ENCODE measurements at regions of chr9 and their contacts with region 1.

Region 1: DNA sequence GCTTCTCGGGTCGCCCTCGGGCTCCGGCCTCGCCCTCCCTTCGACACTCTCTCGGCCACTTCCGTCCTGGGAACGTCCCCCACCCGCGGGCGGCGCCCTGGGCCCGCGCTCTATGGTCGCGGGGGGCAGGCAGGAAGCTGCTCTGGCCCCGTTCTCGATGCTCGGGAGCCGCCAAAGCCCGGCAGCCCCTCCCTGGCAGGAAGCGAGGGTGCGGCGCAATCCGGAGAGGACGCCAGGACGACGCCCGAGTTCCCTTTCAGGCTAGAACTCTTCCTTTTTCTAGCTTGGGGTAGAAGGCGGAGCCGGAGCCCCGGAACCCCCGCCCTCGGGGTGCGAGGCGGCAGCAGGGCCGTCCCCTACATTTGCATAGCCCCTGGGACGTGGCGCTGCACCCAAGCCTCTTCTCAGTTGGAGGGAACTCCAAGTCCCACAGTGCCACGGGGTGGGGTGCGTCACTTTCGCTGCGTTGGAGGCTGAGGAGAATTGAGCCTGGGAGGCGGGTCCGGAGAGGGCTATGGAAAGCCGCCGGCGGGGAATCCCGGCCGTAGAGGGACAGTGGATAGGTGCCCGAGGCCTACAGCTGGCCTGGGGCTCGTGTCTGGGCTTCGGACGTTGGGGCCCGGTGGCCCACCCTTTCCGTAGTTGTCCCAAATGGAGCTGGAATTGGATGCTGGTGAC is at the starts of genes CREB3 and TLN1:
- DNase-seq: peak; percentile 99
- ATAC-seq: peak; percentile 90
- H3K4me3 Mint-ChIP-seq: no peak within 1 kb of the TSS
- H3K27ac Mint-ChIP-seq: peak within 1 kb of the TSS; percentile 87
- H3K4me1 Mint-ChIP-seq: peaks cover 23% of the 10 kb centered on the region
- H3K27me3 Mint-ChIP-seq: no peaks in the 10 kb centered on the region
- total RNA-seq, gene CREB3: 20.5 to 24.7 TPM
- total RNA-seq, gene TLN1: 372 to 374 TPM

Region 2: GRCh38 chr9:35611230-35611797 is 120.9 kb before region 1 on chr9:
- CTCF ChIA-PET with region 1: interaction called, 15 read pairs
- DNase-seq: peak; percentile 73
- ATAC-seq: peak; percentile 87
- H3K4me3 Mint-ChIP-seq: no peak overlapping the region
- H3K27ac Mint-ChIP-seq: no peak overlapping the region
- H3K4me1 Mint-ChIP-seq: peaks cover 16% of the 10 kb centered on the region
- H3K27me3 Mint-ChIP-seq: no peaks in the 10 kb centered on the region

Region 3: DNA sequence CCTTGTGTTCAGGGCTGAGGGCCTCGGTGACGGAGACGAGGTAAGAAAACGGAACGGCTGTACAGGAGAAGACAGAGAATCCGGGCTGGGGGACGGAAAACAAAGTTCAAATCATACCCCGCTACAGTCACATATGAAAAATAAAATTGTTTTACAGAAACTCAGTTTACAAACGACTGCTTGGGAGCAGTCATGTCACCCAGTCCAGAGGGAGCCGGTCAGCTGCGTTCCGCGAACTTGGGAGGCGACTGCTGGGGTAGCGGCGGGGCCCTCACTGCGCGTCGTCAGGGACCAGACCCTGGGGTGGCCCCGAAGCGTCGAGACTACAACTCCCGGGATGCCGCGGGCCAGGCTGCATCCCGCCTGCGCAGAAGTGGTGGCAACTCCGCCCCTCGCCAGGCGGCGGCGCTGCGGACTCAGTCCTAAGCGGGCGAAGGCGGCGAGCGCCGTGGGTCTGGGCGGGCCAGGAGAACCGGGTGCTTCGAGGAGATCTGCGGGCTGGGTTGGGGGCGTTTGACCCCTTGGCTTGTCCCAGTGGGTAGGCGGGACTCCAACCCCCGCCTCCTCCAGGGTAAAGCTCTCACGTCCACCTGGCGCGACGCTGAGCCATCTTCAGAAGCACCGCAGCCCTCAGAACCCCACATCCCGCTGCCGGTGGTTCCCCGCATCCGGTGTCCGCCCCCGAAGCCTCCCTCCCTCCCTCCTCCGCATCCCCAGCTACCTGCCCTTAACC is 85.6 kb before region 1 on chr9:
- CTCF ChIA-PET with region 1: interaction called, 67 read pairs
- DNase-seq: peak; percentile 95
- ATAC-seq: peak; percentile 90
- H3K4me3 Mint-ChIP-seq: peak overlapping the region; percentile 99
- H3K27ac Mint-ChIP-seq: peak overlapping the region; percentile 97
- H3K4me1 Mint-ChIP-seq: peaks cover 47% of the 10 kb centered on the region
- H3K27me3 Mint-ChIP-seq: no peaks in the 10 kb centered on the region

Region 4: GRCh38 chr9:35748858-35749514 is 16.7 kb after region 1 on chr9 and contains the starts of genes GBA2 and RGP1:
- CTCF ChIA-PET with region 1: interaction called, 150 read pairs
- DNase-seq: peak; percentile 83
- ATAC-seq: peak; percentile 83
- H3K4me3 Mint-ChIP-seq: peak within 1 kb of the TSS; percentile 88
- H3K27ac Mint-ChIP-seq: peak within 1 kb of the TSS; percentile 86
- H3K4me1 Mint-ChIP-seq: peaks cover 41% of the 10 kb centered on the region
- H3K27me3 Mint-ChIP-seq: no peaks in the 10 kb centered on the region
- total RNA-seq, gene GBA2: 57.7 to 58.8 TPM
- total RNA-seq, gene RGP1: 21.0 to 23.6 TPM

Region 5: GRCh38 chr9:35790385-35791296 is 58.4 kb after region 1 on chr9:
- CTCF ChIA-PET with region 1: interaction called, 13 read pairs
- DNase-seq: peak; percentile 69
- ATAC-seq: peak; percentile 89
- H3K4me3 Mint-ChIP-seq: no peak overlapping the region
- H3K27ac Mint-ChIP-seq: no peak overlapping the region
- H3K4me1 Mint-ChIP-seq: peaks cover 11% of the 10 kb centered on the region
- H3K27me3 Mint-ChIP-seq: no peaks in the 10 kb centered on the region